ENCODE measurements at regions of chr2 and their contacts with region 1.

Region 1: GRCh38 chr2:205872716-205873115 is 190.4 kb downstream of the NRP2 start:
- DNase-seq: no peak
- H3K4me3 ChIP-seq: no peak overlapping the region
- H3K27ac ChIP-seq: no peak overlapping the region
- H3K4me1 ChIP-seq: peaks cover 13% of the 10 kb centered on the region
- H3K27me3 ChIP-seq: no peaks in the 10 kb centered on the region
- CTCF ChIP-seq: no peak

Region 2: GRCh38 chr2:205800773-205801172 is 71.9 kb before region 1 on chr2:
- CTCF ChIA-PET with region 1: no interaction called
- dilution Hi-C with region 1: loop called (anchors 5 kb)
- in situ Hi-C with region 1: no loop called
- intact Hi-C with region 1: no loop called
- DNase-seq: no peak
- H3K4me3 ChIP-seq: no peak overlapping the region
- H3K27ac ChIP-seq: no peak overlapping the region
- H3K4me1 ChIP-seq: no peaks in the 10 kb centered on the region
- H3K27me3 ChIP-seq: no peaks in the 10 kb centered on the region
- CTCF ChIP-seq: no peak